CD8-positive, alpha-beta T cell (primary cell): ENCODE measurements at regions of chr1 and their contacts with region 1.

Region 1: DNA sequence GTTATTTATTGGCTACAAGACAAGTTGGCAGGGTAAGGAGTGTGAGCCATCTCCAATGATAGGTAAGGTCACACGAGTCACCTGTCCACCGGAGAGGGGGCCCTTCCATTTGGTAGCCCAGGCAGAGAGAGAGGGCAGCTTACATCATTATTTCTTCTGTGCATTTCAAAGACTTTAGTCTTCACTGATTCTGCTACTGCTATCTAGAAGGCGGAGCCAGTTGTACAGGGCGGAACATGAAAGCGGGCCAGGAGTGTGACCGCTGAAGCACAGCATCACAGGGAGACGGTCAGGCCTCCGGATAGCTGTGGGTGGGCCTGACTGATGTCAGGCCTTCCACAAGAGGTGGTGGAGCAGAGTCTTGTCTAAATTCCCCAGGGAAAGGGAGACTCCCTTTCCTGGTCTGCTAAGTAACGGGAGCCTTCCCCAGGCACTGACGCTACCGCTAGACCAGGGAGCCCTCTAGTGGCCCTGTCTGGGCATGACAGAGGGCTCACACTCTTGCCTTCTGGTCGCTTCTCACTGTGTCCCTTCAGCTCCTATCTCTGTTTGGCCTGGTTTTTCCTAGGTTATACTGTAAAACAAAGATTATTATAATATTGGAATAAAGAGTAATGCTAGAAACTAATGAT is 36.7 kb downstream of the ZNF695 start:
- DNase-seq: peak in 8 of 9 experiments; percentile 20 to 58 (median 38)
- ATAC-seq: no peak
- H3K4me3 ChIP-seq: no peak overlapping the region
- H3K4me3 Mint-ChIP-seq: no peak overlapping the region
- H3K27ac ChIP-seq: no peak overlapping the region
- H3K27ac Mint-ChIP-seq: no peak overlapping the region
- H3K4me1 ChIP-seq: no peaks in the 10 kb centered on the region
- H3K4me1 Mint-ChIP-seq: no peaks in the 10 kb centered on the region
- H3K27me3 ChIP-seq: no peaks in the 10 kb centered on the region
- H3K27me3 Mint-ChIP-seq: no peaks in the 10 kb centered on the region
- CTCF ChIP-seq: peak; percentile 67

Region 2: GRCh38 chr1:246959944-246960693 is 11.1 kb before region 1 on chr1:
- CTCF ChIA-PET with region 1: interaction called, 12 read pairs
- POLR2A ChIA-PET with region 1: no interaction called
- intact Hi-C with region 1: no loop called
- DNase-seq: peak in 1 of 9 experiments; percentile 7
- ATAC-seq: no peak
- H3K4me3 ChIP-seq: no peak overlapping the region
- H3K4me3 Mint-ChIP-seq: no peak overlapping the region
- H3K27ac ChIP-seq: no peak overlapping the region
- H3K27ac Mint-ChIP-seq: no peak overlapping the region
- H3K4me1 ChIP-seq: no peaks in the 10 kb centered on the region
- H3K4me1 Mint-ChIP-seq: no peaks in the 10 kb centered on the region
- H3K27me3 ChIP-seq: no peaks in the 10 kb centered on the region
- H3K27me3 Mint-ChIP-seq: peaks cover 2% of the 10 kb centered on the region
- CTCF ChIP-seq: no peak